Heart right ventricle (tissue), 16 donors: ENCODE measurements at regions of chr2 and their contacts with region 1.

Region 1: GRCh38 chr2:136645236-136645828 is 120.0 kb upstream of the THSD7B start:
- DNase-seq: no peak
- ATAC-seq: peak in 3 of 8 donors; percentile 48 to 65 (median 55)
- H3K4me3 ChIP-seq: no peak overlapping the region
- H3K27ac ChIP-seq: no peak overlapping the region
- H3K4me1 ChIP-seq: peaks cover 0 to 11% (median 6%) of the 10 kb centered on the region in 9 donors
- H3K27me3 ChIP-seq: no peaks in the 10 kb centered on the region
- CTCF ChIP-seq: no peak

Region 2: DNA sequence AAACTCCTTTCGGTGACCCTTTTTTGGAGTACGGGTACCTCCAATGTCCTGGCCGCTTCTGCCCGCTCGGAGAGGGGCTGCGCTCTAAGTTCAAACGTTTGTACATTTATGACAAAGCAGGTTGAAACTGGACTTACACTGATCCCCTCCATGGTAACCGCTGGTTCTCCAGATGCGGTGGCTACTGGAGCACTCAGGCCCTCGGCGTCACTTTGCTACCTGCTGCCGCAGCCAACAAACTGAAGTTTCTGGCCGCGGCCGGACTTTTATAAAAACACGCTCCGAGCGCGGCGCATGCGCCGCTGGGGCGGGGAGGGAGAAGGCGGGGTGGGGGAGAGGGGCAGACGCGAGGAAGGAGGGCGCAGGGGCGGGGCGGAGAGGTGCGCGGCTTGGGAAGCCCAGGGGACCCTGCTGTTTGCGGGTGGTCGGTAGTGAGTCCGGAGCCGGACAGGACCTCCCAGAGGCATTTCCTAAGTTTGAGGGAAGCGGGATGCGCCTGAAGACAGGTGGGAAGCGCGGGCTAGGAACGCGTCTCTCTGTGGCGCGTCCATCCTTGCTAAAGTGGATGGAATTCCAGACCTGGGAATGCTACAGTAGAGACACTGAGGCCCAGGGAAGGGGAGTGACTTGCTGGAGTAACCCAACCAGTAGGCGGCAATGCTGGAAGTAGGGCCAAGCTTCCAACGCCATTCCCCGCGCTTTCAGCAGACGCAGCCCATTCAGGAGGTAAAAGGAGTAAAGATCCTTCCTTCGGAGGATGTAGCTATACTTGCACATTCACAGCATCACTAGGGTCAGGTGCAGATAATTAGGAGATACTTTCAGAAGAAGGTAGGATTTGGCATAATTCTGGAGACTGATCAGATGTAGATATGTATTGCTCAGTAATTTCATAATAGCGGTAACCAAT is 527.2 kb before region 1 on chr2 and contains the start of gene CXCR4:
- intact Hi-C with region 1: no loop called
- DNase-seq: peak; percentile 76
- ATAC-seq: peak; percentile 50 to 84 (median 74)
- H3K4me3 ChIP-seq: peak within 1 kb of the TSS; percentile 42 to 74 (median 60)
- H3K27ac ChIP-seq: peak within 1 kb of the TSS in 9 of 10 donors; percentile 14 to 94 (median 39)
- H3K4me1 ChIP-seq: peaks cover 0 to 65% (median 27%) of the 10 kb centered on the region in 9 donors
- H3K27me3 ChIP-seq: peaks cover 0 to 67% (median 42%) of the 10 kb centered on the region in 7 donors
- CTCF ChIP-seq: peak in 4 of 9 donors; percentile 10 to 36 (median 24)
- total RNA-seq, gene CXCR4: 1.5 to 24.0 (median 4.9) TPM

Region 3: GRCh38 chr2:136705336-136705735 is 60.0 kb after region 1 on chr2:
- intact Hi-C with region 1: no loop called
- DNase-seq: no peak
- ATAC-seq: no peak
- H3K4me3 ChIP-seq: no peak overlapping the region
- H3K27ac ChIP-seq: no peak overlapping the region
- H3K4me1 ChIP-seq: no peaks in the 10 kb centered on the region
- H3K27me3 ChIP-seq: no peaks in the 10 kb centered on the region
- CTCF ChIP-seq: no peak

Region 4: DNA sequence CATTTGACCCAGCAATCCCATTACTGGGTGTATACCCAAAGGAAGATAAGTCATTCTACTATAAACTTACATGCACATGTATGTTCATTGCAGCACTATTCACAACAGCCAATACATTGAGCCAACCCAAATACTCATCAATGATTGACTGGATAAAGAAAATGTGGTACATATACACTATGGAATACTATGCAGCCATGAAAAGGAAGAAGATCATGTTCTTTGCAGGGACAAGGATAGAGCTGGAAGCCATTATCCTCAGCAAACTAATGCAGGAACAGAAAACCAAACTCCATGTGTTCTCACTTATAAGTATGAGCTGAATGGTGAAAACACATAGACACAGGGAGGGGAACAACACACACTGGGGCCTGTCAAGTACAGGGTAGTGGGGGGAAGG is 1092.2 kb after region 1 on chr2:
- intact Hi-C with region 1: loop called in 1 of 10 experiments (anchors 10 kb)
- DNase-seq: no peak
- ATAC-seq: no peak
- H3K4me3 ChIP-seq: no peak overlapping the region
- H3K27ac ChIP-seq: no peak overlapping the region
- H3K4me1 ChIP-seq: no peaks in the 10 kb centered on the region
- H3K27me3 ChIP-seq: no peaks in the 10 kb centered on the region
- CTCF ChIP-seq: no peak